MCF 10A (cell line): ENCODE measurements at regions of chr6 and their contacts with region 1.

Region 1: GRCh38 chr6:80106418-80107235 is at the start of gene BCKDHB:
- DNase-seq: peak; percentile 100
- H3K4me3 Mint-ChIP-seq: peak within 1 kb of the TSS; percentile 96
- H3K27ac Mint-ChIP-seq: peak within 1 kb of the TSS; percentile 16
- H3K4me1 Mint-ChIP-seq: peaks cover 10% of the 10 kb centered on the region
- H3K27me3 Mint-ChIP-seq: peaks cover 11% of the 10 kb centered on the region
- CTCF ChIP-seq: no peak
- total RNA-seq, gene BCKDHB: 14.5 and 17.7 TPM in 2 replicates

Region 2: DNA sequence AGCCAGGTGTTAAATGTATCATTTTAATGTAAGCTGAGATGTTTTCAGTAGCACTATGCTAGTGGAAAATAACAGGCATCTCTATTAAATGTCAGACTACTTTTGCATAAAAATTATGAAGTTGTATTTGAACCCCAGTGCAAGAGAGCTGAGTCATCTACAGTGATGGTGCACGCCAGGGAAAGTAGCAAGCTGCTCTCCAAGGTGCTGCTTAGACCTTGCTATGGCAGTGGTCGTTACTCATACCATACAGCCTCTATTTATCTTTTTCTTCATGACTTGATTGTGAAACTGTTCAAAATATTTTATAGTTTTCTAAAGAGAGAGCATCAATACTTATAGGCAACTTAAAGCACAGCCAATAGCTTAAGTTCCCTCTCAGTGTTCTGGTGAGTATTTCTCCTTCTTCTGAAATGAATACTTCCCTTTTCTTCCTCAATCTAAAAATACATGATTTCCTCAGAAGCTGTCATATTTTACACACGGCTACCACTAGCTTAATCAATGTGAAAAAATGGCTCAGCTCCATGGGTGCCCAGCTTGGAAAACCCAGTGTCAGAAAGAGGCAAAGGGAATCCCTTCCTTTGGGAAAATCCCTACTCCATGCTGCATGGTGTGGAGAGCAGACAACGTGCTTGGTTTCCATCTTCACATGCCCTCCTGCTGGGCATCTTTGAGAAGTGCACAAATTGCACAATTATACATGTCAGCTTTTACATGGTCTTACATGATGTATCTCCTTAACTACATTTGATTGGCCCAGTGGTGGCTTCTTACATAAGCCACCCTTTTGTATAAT is 264.9 kb before region 1 on chr6:
- CTCF ChIA-PET with region 1: no interaction called
- POLR2A ChIA-PET with region 1: no interaction called
- intact Hi-C with region 1: no loop called
- DNase-seq: peak; percentile 26
- H3K4me3 Mint-ChIP-seq: no peak overlapping the region
- H3K27ac Mint-ChIP-seq: no peak overlapping the region
- H3K4me1 Mint-ChIP-seq: no peaks in the 10 kb centered on the region
- H3K27me3 Mint-ChIP-seq: peaks cover 14% of the 10 kb centered on the region
- CTCF ChIP-seq: no peak

Region 3: GRCh38 chr6:80126657-80127345 is 20.2 kb after region 1 on chr6:
- CTCF ChIA-PET with region 1: interaction called, 5 read pairs
- POLR2A ChIA-PET with region 1: interaction called, 16 read pairs
- intact Hi-C with region 1: no loop called
- DNase-seq: no peak
- H3K4me3 Mint-ChIP-seq: no peak overlapping the region
- H3K27ac Mint-ChIP-seq: no peak overlapping the region
- H3K4me1 Mint-ChIP-seq: peaks cover 12% of the 10 kb centered on the region
- H3K27me3 Mint-ChIP-seq: no peaks in the 10 kb centered on the region
- CTCF ChIP-seq: no peak

Region 4: GRCh38 chr6:80165143-80165542 is 58.5 kb after region 1 on chr6:
- CTCF ChIA-PET with region 1: no interaction called
- POLR2A ChIA-PET with region 1: interaction called, 10 read pairs
- intact Hi-C with region 1: no loop called
- DNase-seq: peak; percentile 83
- H3K4me3 Mint-ChIP-seq: peak overlapping the region; percentile 6
- H3K27ac Mint-ChIP-seq: no peak overlapping the region
- H3K4me1 Mint-ChIP-seq: no peaks in the 10 kb centered on the region
- H3K27me3 Mint-ChIP-seq: no peaks in the 10 kb centered on the region
- CTCF ChIP-seq: no peak